ENCODE measurements at regions of chr4 and their contacts with region 1.

Region 1: GRCh38 chr4:71009890-71010588 is 16.6 kb downstream of the DCK start:
- DNase-seq: no peak
- H3K4me3 ChIP-seq: no peak overlapping the region
- H3K27ac ChIP-seq: no peak overlapping the region
- H3K4me1 ChIP-seq: peaks cover 0 to 9% (median 2%) of the 10 kb centered on the region in 4 donors
- H3K27me3 ChIP-seq: no peaks in the 10 kb centered on the region
- CTCF ChIP-seq: peak; percentile 57 to 73 (median 62)
- EP300 ChIP-seq: no peak
- POLR2A ChIP-seq: no peak

Region 2: GRCh38 chr4:70637239-70637913 is 372.7 kb before region 1 on chr4:
- in situ Hi-C with region 1: loop called in 1 of 4 experiments (anchors 25 kb)
- intact Hi-C with region 1: no loop called
- DNase-seq: no peak
- H3K4me3 ChIP-seq: no peak overlapping the region
- H3K27ac ChIP-seq: no peak overlapping the region
- H3K4me1 ChIP-seq: peaks cover 0 to 5% (median 0%) of the 10 kb centered on the region in 4 donors
- H3K27me3 ChIP-seq: no peaks in the 10 kb centered on the region
- CTCF ChIP-seq: no peak
- EP300 ChIP-seq: no peak
- POLR2A ChIP-seq: no peak

Region 3: GRCh38 chr4:70839589-70840093 is 170.4 kb before region 1 on chr4 and contains the start of gene GRSF1:
- in situ Hi-C with region 1: loop called in 1 of 4 experiments (anchors 25 kb)
- intact Hi-C with region 1: no loop called
- DNase-seq: peak; percentile 96
- H3K4me3 ChIP-seq: peak within 1 kb of the TSS; percentile 82 to 98 (median 90)
- H3K27ac ChIP-seq: peak within 1 kb of the TSS; percentile 95 to 99 (median 98)
- H3K4me1 ChIP-seq: peaks cover 4 to 26% (median 8%) of the 10 kb centered on the region in 4 donors
- H3K27me3 ChIP-seq: no peaks in the 10 kb centered on the region
- CTCF ChIP-seq: no peak
- EP300 ChIP-seq: no peak
- POLR2A ChIP-seq: peak; percentile 80
- total RNA-seq, gene GRSF1: 42.6 to 63.2 (median 60.8) TPM

Region 4: DNA sequence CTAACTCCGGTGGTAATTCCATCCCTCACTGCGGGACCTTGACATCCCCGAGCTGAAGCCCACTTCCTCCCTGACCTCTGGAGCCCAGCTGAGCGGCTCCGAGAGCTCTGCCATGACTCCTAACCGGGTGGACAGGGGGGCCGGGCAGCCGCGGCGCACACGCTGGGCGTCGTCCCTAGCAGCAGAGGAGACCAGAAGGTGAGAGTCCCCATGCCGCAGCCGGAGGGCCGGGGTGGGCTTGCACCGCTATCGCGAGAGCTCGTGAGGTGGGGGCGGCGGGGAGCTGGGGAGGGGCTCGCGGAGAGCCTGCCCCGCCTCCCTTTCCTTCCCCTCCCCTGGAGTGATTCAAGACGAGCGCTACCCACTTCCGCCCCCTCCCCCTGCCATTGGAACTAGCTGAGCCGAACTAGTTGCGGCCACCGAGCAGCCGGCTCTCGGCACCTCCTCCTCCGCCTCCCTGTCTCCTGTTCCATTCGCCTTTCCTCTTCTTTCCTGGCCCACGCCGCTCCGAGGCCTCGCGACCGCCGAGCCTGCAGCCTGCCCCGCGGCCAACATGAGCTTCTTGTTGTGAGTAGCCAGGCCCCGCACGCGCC is 108.0 kb before region 1 on chr4 and contains the start of gene MOB1B:
- in situ Hi-C with region 1: loop called in 1 of 4 experiments (anchors 25 kb)
- intact Hi-C with region 1: no loop called
- DNase-seq: peak; percentile 87
- H3K4me3 ChIP-seq: peak within 1 kb of the TSS; percentile 65 to 91 (median 72)
- H3K27ac ChIP-seq: peak within 1 kb of the TSS; percentile 84 to 91 (median 88)
- H3K4me1 ChIP-seq: peaks cover 0 to 13% (median 5%) of the 10 kb centered on the region in 4 donors
- H3K27me3 ChIP-seq: no peaks in the 10 kb centered on the region
- CTCF ChIP-seq: peak; percentile 35 to 55 (median 40)
- EP300 ChIP-seq: no peak
- POLR2A ChIP-seq: peak; percentile 51
- total RNA-seq, gene MOB1B: 6.7 to 15.4 (median 11.0) TPM

Region 5: GRCh38 chr4:70936200-70936787 is 73.7 kb before region 1 on chr4:
- in situ Hi-C with region 1: no loop called
- intact Hi-C with region 1: no loop called
- DNase-seq: no peak
- H3K4me3 ChIP-seq: no peak overlapping the region
- H3K27ac ChIP-seq: no peak overlapping the region
- H3K4me1 ChIP-seq: peaks cover 0 to 3% (median 0%) of the 10 kb centered on the region in 4 donors
- H3K27me3 ChIP-seq: no peaks in the 10 kb centered on the region
- CTCF ChIP-seq: no peak
- EP300 ChIP-seq: no peak
- POLR2A ChIP-seq: no peak

Region 6: DNA sequence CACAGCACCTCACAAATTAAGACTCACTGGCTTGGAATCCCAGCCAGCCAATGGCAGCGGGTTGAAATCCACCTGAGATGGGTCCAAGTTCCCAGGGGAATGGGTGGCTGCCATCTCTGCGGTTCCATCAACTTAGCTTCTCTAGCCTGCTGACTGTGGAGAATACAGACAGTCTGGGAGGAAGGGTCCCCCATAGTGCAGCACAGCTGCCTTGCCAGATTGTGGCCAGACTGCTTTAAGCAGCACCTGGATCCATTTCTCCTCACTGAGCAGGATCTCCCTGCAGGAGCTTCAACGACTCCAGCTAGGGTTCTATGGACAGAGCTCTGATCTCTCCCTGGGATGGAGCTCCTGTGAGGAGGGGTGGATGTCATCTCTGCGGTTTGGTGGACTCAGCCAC is 35.2 kb after region 1 on chr4:
- in situ Hi-C with region 1: no loop called
- intact Hi-C with region 1: no loop called
- DNase-seq: no peak
- H3K4me3 ChIP-seq: no peak overlapping the region
- H3K27ac ChIP-seq: no peak overlapping the region
- H3K4me1 ChIP-seq: no peaks in the 10 kb centered on the region
- H3K27me3 ChIP-seq: no peaks in the 10 kb centered on the region
- CTCF ChIP-seq: no peak
- EP300 ChIP-seq: no peak
- POLR2A ChIP-seq: no peak

Region 7: GRCh38 chr4:71066737-71067716 is 57.0 kb after region 1 on chr4:
- in situ Hi-C with region 1: no loop called
- intact Hi-C with region 1: no loop called
- DNase-seq: no peak
- H3K4me3 ChIP-seq: no peak overlapping the region
- H3K27ac ChIP-seq: no peak overlapping the region
- H3K4me1 ChIP-seq: peaks cover 0 to 17% (median 7%) of the 10 kb centered on the region in 4 donors
- H3K27me3 ChIP-seq: no peaks in the 10 kb centered on the region
- CTCF ChIP-seq: no peak
- EP300 ChIP-seq: no peak
- POLR2A ChIP-seq: no peak